PC-3 (cell line): ENCODE measurements at regions of chr11 and their contacts with region 1.

Region 1: GRCh38 chr11:128448200-128448886 is 139.0 kb downstream of the ETS1 start:
- DNase-seq: peak; percentile 100
- ATAC-seq: peak; percentile 97
- H3K4me3 ChIP-seq: peak overlapping the region; percentile 43; the same call in 1 of the 2 replicates
- H3K27ac ChIP-seq: peak overlapping the region; percentile 91
- H3K4me1 ChIP-seq: peaks cover 31% of the 10 kb centered on the region
- H3K27me3 ChIP-seq: no peaks in the 10 kb centered on the region
- CTCF ChIP-seq: peak; percentile 65

Region 2: DNA sequence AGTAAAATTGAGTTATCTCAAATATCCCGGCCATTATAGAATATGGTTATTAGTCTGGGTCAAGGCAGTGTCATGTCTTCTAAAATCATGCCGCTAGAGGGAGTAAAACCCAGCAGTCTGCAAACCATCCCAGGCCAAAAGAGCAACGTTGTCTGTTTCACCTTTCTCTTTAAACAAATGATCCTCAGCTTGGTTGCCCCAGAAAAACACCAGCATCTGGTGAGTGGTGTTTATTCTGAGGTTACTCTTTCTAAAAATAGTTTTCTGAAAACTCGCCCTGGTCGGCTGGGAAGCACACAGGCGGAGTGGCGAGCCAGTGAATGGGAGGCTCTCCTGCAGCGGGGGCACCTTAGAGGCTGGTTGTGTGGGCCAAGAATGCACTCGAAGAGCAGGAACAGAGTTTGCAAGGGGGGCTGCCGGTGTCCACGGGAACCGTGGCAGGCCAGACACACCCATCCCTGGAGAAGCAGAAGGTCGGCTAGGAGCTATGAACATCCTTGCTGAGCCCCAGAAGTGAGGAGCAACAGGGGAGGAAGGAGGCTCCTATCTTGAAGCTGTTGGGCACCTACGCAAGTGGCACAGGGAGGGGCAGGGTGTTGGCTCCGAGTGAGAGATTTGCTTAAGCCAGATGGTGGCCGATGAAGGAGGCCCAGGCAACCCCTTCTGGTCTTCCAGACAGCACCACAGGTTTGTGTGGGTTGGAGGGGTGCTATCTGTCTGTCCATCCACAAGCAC is 158.1 kb before region 1 on chr11:
- CTCF ChIA-PET with region 1: interaction called, 8 read pairs
- POLR2A ChIA-PET with region 1: interaction called, 4 read pairs
- intact Hi-C with region 1: loop called (anchors 1 kb)
- DNase-seq: peak; percentile 94
- ATAC-seq: peak; percentile 82
- H3K4me3 ChIP-seq: no peak overlapping the region
- H3K27ac ChIP-seq: peak overlapping the region; percentile 53
- H3K4me1 ChIP-seq: peaks cover 39% of the 10 kb centered on the region
- H3K27me3 ChIP-seq: no peaks in the 10 kb centered on the region
- CTCF ChIP-seq: peak; percentile 97

Region 3: DNA sequence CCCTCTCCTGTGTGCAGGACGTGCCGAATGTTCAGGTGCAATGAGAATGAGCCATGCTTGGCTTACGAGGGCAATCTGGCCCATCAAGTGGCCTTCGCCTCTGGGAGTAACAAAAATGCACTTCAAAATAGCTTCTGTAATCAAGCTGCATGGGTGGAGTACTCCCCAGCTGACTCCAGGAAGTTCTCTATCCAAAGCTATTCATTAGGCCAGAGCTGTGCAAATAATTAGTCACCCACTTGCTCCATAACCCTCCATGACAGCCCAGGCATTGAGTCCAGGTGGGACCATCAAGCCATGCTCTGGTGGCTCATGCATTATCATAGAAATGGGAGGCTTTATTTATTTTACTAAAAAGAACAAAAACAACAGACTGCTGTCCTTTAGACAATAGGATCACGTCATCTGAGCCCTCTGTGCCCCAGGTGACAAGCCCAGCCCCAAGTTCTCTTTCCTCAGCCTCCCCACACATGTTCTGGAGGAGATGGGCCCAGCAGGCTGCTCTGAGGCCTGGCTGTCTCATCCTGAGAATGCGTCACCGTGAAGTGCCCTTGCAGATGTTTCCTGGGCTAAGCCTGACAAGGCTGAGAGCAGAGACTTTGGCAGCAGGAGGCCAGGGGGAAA is 105.7 kb before region 1 on chr11:
- CTCF ChIA-PET with region 1: no interaction called
- POLR2A ChIA-PET with region 1: no interaction called
- intact Hi-C with region 1: loop called (anchors 1 kb)
- DNase-seq: peak; percentile 96
- ATAC-seq: peak; percentile 91
- H3K4me3 ChIP-seq: no peak overlapping the region
- H3K27ac ChIP-seq: peak overlapping the region; percentile 95
- H3K4me1 ChIP-seq: peaks cover 59% of the 10 kb centered on the region
- H3K27me3 ChIP-seq: no peaks in the 10 kb centered on the region
- CTCF ChIP-seq: no peak

Region 4: GRCh38 chr11:128399251-128400121 is 48.9 kb before region 1 on chr11:
- CTCF ChIA-PET with region 1: no interaction called
- POLR2A ChIA-PET with region 1: no interaction called
- intact Hi-C with region 1: no loop called
- DNase-seq: peak; percentile 66
- ATAC-seq: peak; percentile 84
- H3K4me3 ChIP-seq: no peak overlapping the region
- H3K27ac ChIP-seq: no peak overlapping the region
- H3K4me1 ChIP-seq: peaks cover 11% of the 10 kb centered on the region
- H3K27me3 ChIP-seq: no peaks in the 10 kb centered on the region
- CTCF ChIP-seq: no peak

Region 5: DNA sequence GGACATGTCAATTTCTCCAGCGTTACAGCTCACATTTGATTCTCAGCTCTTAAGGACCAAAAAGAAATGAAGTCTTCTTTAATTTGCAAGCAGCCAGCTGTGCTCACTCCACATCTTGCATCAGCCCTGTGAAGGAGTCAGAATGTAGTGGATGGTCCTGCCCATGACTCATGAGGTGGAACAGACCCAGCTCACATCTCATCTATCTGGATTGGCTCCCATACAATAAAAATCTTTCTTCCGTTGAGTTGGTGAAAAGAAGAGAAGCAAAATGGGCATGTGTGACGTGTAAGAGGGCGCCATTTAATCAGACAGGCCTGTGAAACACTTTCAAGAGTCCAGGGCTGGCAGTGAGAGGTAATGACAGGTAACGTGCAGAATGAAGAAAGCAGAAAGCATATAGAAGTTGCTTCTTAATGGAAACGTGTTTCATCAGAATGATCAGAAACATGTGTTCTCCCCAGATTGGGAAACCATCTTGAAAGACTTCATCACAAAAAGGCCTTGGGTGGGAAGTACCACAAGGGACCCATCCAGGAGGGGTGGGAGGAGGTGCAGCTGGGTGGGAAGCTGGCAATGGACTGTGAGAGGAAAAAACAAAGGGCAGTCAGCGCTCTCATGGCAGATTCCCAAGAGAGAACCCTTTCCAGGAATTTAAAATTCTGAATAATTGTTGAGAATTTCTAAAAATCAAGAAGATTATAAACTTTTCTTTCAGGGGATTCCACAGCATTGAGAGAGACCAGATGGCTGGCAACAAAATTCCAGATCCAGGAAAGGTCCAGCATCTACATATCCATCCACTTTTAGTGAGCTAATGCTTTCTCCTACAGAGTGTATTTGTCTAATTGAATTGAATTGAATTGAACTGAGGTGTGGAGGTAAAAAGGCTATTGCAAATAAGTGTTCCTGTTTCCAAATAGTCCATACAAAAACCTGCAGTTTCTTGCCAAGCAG is 82.1 kb after region 1 on chr11:
- CTCF ChIA-PET with region 1: no interaction called
- POLR2A ChIA-PET with region 1: no interaction called
- intact Hi-C with region 1: no loop called
- DNase-seq: peak; percentile 88
- ATAC-seq: peak; percentile 86
- H3K4me3 ChIP-seq: no peak overlapping the region
- H3K27ac ChIP-seq: peak overlapping the region; percentile 23
- H3K4me1 ChIP-seq: peaks cover 35% of the 10 kb centered on the region
- H3K27me3 ChIP-seq: no peaks in the 10 kb centered on the region
- CTCF ChIP-seq: 0 out of 2 replicates have a peak, but pooled peaks have one; percentile 17